ENCODE measurements at regions of chr1 and their contacts with region 1.

Region 1: DNA sequence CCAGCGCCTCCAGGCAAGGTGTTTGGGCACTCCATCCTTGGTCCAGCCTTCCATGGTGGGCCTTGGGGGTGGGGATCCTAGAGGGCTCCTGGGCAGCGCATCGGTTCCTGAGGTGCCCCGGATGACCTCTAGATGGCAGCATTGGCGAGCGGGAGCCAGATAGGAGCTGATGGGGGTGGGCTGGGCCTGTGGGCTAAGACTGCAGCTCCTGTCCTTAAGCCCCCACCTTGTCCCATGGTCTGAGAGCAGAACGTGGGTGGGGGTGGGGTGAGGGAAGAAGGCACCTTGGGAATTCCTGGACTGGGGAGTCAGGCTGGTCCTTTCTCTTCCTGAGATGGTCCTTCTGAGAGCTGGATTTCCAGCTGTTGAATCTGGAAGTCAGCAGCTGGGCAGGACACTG is 93.4 kb upstream of the CSF3R start:
- DNase-seq: peak; percentile 71
- H3K4me3 Mint-ChIP-seq: no peak overlapping the region
- H3K27ac Mint-ChIP-seq: no peak overlapping the region
- H3K4me1 Mint-ChIP-seq: no peaks in the 10 kb centered on the region
- H3K27me3 Mint-ChIP-seq: peaks cover 14% of the 10 kb centered on the region

Region 2: GRCh38 chr1:34681480-34682451 is 1894.4 kb before region 1 on chr1:
- CTCF ChIA-PET with region 1: no interaction called
- intact Hi-C with region 1: no loop called
- DNase-seq: peak; percentile 76
- H3K4me3 Mint-ChIP-seq: no peak overlapping the region
- H3K27ac Mint-ChIP-seq: no peak overlapping the region
- H3K4me1 Mint-ChIP-seq: peaks cover 10% of the 10 kb centered on the region
- H3K27me3 Mint-ChIP-seq: peaks cover 10% of the 10 kb centered on the region

Region 3: DNA sequence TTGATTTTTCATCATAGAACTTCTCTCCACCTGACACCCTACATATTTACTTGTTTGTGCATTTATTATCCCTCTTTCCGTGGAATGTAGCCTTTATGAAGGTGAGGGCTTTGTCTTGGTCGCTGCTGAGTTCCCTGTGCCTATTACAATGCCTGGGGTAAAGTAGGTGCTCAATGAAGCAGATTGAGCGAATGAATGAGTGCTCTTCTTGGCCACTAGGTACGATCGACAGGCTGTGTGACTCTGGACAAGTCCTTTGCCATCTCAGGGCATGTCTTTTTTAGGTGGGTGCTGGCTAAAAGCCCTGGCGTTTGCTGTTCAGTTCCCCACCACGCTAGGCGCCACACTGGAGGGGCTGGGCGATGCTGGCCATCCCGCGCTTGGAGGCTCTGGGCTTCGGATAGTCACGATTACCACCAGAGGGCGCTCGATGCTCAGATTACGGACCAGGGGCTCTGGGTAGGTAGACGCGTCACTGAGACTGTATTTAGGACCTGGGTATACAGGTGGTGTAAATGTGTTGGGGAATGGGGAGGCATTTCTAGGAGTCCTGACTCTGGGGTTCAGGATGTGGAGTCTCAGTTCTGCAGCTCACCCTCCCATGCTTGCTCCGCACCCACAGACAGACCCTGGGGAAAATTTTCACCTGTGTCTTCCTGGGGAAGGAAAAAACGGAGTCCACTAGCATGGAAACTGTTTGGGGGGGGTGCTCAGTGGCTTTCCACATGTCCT is 22.4 kb before region 1 on chr1:
- CTCF ChIA-PET with region 1: interaction called, 10 read pairs
- intact Hi-C with region 1: no loop called
- DNase-seq: peak; percentile 86
- H3K4me3 Mint-ChIP-seq: no peak overlapping the region
- H3K27ac Mint-ChIP-seq: no peak overlapping the region
- H3K4me1 Mint-ChIP-seq: no peaks in the 10 kb centered on the region
- H3K27me3 Mint-ChIP-seq: peaks cover 35% of the 10 kb centered on the region

Region 4: GRCh38 chr1:37323486-37324377 is 747.6 kb after region 1 on chr1:
- CTCF ChIA-PET with region 1: interaction called, 4 read pairs
- intact Hi-C with region 1: loop called (anchors 5 kb)
- DNase-seq: peak; percentile 54
- H3K4me3 Mint-ChIP-seq: no peak overlapping the region
- H3K27ac Mint-ChIP-seq: no peak overlapping the region
- H3K4me1 Mint-ChIP-seq: peaks cover under 1% of the 10 kb centered on the region
- H3K27me3 Mint-ChIP-seq: peaks cover 23% of the 10 kb centered on the region

Measured in activated naive CD4-positive, alpha-beta T cell treated with anti-CD3 and anti-CD28 coated beads for 36 hours (primary cell).